AG04449 (cell line): ENCODE measurements at regions of chr7 and their contacts with region 1.

Region 1: DNA sequence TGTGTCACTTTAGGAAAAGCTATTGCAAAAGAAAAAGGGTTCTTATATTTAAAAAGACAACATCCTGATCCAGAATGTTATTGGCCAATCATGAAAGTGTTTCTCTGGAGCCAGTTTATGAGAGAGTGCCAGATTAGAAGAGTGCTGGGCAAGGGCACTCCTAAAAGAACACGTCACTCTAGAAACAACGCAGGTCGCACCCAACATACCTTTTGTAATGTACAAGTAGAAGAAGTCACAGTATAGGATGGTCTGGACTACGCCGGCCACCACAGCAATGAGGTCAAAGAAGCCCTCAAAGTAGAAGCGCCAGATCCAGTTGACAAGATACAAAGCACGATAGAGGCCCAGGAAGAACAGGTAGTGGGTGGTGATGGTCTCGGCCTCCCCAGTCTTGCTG is 18.1 kb upstream of the DAGLB start:
- DNase-seq: no peak
- H3K4me3 ChIP-seq: no peak overlapping the region
- CTCF ChIP-seq: no peak

Region 2: GRCh38 chr7:6476596-6477299 is 10.9 kb after region 1 on chr7:
- CTCF ChIA-PET with region 1: interaction called, 10 read pairs
- POLR2A ChIA-PET with region 1: interaction called, 7 read pairs
- DNase-seq: no peak
- H3K4me3 ChIP-seq: no peak overlapping the region
- CTCF ChIP-seq: no peak